SK-N-SH (cell line): ENCODE measurements at regions of chr19 and their contacts with region 1.

Region 1: DNA sequence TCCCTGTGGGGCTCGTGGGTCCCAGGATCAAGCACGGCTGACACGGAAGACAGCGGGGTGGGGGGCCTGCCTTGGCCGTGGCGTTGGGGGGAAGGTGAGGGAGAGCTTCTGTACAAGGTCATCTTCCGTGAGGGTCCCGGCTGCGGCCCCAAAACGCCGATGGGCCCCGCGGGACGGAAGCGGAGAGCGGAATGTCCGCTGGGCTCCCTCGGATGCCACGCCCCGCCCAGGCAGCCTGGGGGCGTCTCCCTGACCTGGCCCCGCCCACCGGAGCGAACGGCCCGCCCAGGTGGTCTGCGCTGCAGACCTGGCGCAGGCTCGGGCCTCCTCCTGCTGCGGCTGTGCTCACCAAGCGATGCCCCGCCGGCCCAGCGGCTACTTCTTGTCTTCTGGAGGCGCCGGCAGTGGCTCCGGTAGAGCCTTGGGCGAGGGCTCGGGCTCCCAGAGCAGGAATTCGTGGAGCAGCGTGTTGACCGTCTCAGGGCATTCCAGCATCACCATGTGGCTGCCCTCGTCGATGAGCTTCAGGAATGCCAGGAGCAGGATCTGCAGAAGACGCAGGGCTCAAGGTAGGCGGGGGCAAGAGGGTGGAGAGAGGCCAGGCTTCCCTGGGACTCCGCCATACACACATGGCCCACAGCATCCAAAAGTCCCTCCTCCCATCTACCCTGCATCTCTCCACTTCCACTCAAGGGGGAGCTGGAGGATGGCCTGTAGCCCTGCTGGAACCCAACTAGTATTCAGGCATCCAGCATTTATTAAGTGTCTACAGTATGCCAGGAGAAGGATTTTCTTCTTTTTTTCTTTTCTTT is 10.7 kb downstream of the ABHD8 start:
- DNase-seq: peak; percentile 93
- H3K4me3 ChIP-seq: peak overlapping the region; percentile 46 to 63
- H3K27ac ChIP-seq: peak overlapping the region; percentile 38 to 82; a peak in 3 of 4 replicates
- H3K4me1 ChIP-seq: peaks cover 0 to 8% of the 10 kb centered on the region in 2 experiments; a peak in 1 of 4 replicates
- H3K27me3 ChIP-seq: no peaks in the 10 kb centered on the region
- CTCF ChIP-seq: peak; percentile 67
- EP300 ChIP-seq: no peak
- RAD21 ChIP-seq: peak; percentile 80

Region 2: DNA sequence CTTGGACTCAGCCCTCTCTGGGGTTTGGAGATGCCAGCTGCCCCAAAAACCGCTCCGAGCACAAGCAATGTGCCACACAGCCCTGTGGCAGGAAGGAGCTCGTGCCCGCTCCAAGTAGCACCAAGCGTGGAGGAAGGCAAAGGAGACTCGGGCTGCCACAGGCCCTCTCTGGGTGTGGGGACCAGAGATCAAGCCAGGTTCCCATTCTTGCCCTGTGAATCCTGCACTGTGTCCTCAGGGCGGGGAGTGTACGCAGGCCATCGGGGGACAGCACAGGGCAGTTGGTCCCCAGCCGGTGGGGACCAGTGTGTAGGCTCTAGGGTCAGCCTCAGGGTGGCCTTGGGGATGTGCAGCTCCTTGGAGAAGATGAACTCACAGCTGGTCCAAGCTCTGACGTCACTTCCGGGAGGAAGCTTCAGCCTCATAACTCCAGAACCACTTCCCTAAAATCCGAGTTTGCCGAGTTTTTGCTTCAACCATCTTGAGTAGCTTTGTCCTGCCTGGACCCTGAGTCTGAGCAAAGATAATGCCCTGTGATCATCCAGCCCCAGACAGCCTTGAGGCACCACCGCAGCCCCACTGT is 256.6 kb before region 1 on chr19:
- CTCF ChIA-PET with region 1: no interaction called
- POLR2A ChIA-PET with region 1: no interaction called
- DNase-seq: no peak
- H3K4me3 ChIP-seq: no peak overlapping the region
- H3K27ac ChIP-seq: no peak overlapping the region
- H3K4me1 ChIP-seq: no peaks in the 10 kb centered on the region
- H3K27me3 ChIP-seq: no peaks in the 10 kb centered on the region
- CTCF ChIP-seq: no peak
- EP300 ChIP-seq: no peak
- RAD21 ChIP-seq: no peak

Region 3: GRCh38 chr19:17305517-17306284 is 13.2 kb after region 1 on chr19 and contains the start of gene MRPL34:
- CTCF ChIA-PET with region 1: interaction called, 20 read pairs
- POLR2A ChIA-PET with region 1: interaction called, 7 read pairs
- DNase-seq: peak; percentile 90
- H3K4me3 ChIP-seq: peak within 1 kb of the TSS; percentile 73 to 86
- H3K27ac ChIP-seq: peak within 1 kb of the TSS; percentile 72 to 96
- H3K4me1 ChIP-seq: peaks cover 12 to 37% of the 10 kb centered on the region in 2 experiments
- H3K27me3 ChIP-seq: no peaks in the 10 kb centered on the region
- CTCF ChIP-seq: peak; percentile 77
- EP300 ChIP-seq: peak in 1 of 2 experiments; percentile 54; a peak in 1 of 4 replicates
- RAD21 ChIP-seq: peak; percentile 46; the same call in 1 of the 2 replicates
- polyA plus RNA-seq, gene MRPL34: 61.4 and 72.9 TPM in 2 replicates

Region 4: GRCh38 chr19:17405250-17406038 is 113.0 kb after region 1 on chr19 and contains the start of gene BST2:
- CTCF ChIA-PET with region 1: no interaction called
- POLR2A ChIA-PET with region 1: no interaction called
- DNase-seq: peak; percentile 39
- H3K4me3 ChIP-seq: no peak within 1 kb of the TSS; a peak in 1 of 4 replicates
- H3K27ac ChIP-seq: peak within 1 kb of the TSS in 1 of 2 experiments; percentile 47; a peak in 1 of 4 replicates
- H3K4me1 ChIP-seq: peaks cover 0 to 23% of the 10 kb centered on the region in 2 experiments; a peak in 1 of 4 replicates
- H3K27me3 ChIP-seq: no peaks in the 10 kb centered on the region
- CTCF ChIP-seq: no peak
- EP300 ChIP-seq: no peak
- RAD21 ChIP-seq: no peak
- polyA plus RNA-seq, gene BST2: 5.7 and 5.9 TPM in 2 replicates